GM12878 (cell line): ENCODE measurements at regions of chr5 and their contacts with region 1.

Region 1: GRCh38 chr5:141420855-141421496 is at the start of gene PCDHGA11:
- DNase-seq: peak; percentile 37
- ATAC-seq: peak; percentile 77
- H3K4me3 ChIP-seq: peak within 1 kb of the TSS; percentile 76
- H3K27ac ChIP-seq: no peak within 1 kb of the TSS
- H3K4me1 ChIP-seq: peaks cover 4% of the 10 kb centered on the region; the same call in 1 of the 2 replicates
- H3K27me3 ChIP-seq: no peaks in the 10 kb centered on the region; a peak in 1 of 4 replicates
- CTCF ChIP-seq: peak; percentile 83 to 89 (median 89)
- EP300 ChIP-seq: no peak
- POLR2A ChIP-seq: no peak
- RAD21 ChIP-seq: peak; percentile 82
- polyA plus RNA-seq, gene PCDHGA11: 0.21 to 0.31 TPM

Region 2: DNA sequence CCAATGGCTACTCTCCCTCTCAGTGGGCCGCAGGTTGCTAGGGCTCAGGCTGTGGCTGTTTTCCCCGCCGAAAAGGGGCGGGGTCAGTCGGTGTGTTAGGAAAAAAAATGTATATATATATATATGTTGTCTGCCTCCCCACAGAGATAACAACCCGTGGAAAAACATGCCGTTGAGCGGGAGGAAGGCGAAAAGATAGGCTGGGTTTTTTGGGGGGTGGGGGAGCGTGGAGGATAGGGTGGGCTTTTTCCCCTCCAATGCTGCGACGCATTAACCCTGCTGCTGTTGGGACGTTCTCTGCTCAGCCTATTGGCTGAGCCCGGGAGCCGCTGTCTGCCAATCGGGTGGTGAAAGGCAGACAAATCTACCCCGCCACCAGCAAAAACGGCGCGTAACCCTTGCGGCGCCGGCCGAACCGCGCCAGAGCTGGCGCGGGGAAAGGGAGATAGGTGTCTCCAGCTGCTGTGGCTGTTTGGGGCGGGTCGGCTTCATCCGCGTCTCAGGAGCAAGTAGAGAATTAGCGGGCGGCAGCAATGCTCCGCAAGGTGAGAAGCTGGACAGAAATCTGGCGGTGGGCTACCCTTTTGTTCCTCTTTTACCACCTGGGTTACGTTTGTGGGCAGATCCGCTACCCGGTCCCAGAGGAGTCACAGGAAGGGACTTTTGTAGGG is 63.8 kb after region 1 on chr5 and contains the start of gene PCDHGC4:
- CTCF ChIA-PET with region 1: interaction called, 11 read pairs
- POLR2A ChIA-PET with region 1: no interaction called
- RAD21 ChIA-PET with region 1: no interaction called
- SMC1A ChIA-PET with region 1: interaction called, 4 read pairs
- in situ Hi-C with region 1: no loop called
- intact Hi-C with region 1: no loop called
- DNase-seq: no peak
- ATAC-seq: peak; percentile 73
- H3K4me3 ChIP-seq: peak within 1 kb of the TSS; percentile 36
- H3K27ac ChIP-seq: no peak within 1 kb of the TSS
- H3K4me1 ChIP-seq: peaks cover 6% of the 10 kb centered on the region
- H3K27me3 ChIP-seq: peaks cover 0 to 3% of the 10 kb centered on the region in 2 experiments; a peak in 2 of 4 replicates
- CTCF ChIP-seq: no peak
- EP300 ChIP-seq: no peak
- POLR2A ChIP-seq: no peak
- RAD21 ChIP-seq: no peak
- polyA plus RNA-seq, gene PCDHGC4: 0.13 to 0.18 TPM